Activated B cell treated with CpG ODN at 0.5 μM for 24 hours (primary cell): ENCODE measurements at regions of chr7 and their contacts with region 1.

Region 1: DNA sequence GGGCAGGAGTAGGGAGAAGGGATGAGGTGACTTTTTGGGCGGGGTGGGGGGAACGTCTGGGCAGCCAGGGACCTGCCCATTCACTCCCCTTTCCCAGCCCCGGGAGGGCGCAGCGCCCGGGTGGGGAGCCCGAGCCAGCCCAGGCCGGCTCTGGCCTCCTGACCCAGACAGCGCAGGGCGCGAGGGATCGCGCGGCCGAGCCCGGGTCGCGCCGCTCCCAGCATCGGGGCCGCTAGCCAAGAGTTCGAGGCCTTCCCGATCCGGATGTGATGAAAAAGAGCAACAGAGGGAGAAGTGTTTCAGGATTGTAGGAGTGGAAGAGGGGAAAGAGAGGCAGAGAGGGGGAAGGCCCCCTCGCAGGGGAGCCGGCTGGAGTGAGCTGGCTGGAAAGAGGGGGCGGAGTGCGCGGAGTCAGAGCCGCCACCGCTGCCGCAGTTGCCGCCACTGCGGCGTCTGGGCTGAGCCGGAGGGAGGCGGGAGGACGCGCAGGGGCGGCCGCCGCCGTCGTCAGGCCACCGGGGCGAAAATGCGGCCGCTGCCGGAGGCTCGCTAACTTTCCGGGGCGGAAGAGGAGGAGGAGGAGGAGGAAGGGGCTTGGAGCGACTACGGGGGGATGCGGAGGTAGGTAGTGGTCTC is at the start of gene MDFIC:
- DNase-seq: peak; percentile 66
- ATAC-seq: peak; percentile 63
- H3K4me3 Mint-ChIP-seq: peak within 1 kb of the TSS; percentile 95
- H3K27ac Mint-ChIP-seq: peak within 1 kb of the TSS; percentile 97
- H3K4me1 Mint-ChIP-seq: peaks cover 70% of the 10 kb centered on the region
- H3K27me3 Mint-ChIP-seq: no peaks in the 10 kb centered on the region
- CTCF ChIP-seq: no peak
- total RNA-seq, gene MDFIC: 139 and 160 TPM in 2 replicates

Region 2: DNA sequence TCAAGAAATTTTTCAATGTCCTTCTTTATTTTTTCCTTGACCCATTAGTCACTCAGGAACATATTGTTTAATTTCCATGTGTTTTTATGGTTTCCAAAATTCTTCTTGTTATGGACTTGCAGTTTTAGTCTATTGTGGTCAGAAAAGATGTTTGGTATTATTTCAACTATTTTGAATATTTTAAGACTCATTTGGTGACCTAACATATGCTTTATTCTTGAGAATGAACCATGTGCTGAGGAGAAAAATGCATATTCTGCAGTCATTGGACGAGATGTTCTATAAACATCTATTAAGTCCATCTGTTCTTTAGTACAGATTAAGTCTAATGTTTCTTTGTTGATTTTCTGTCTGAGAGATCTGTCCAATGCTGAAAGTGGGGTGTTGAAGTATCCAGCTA is 42.6 kb before region 1 on chr7:
- CTCF ChIA-PET with region 1: no interaction called
- POLR2A ChIA-PET with region 1: no interaction called
- intact Hi-C with region 1: no loop called
- DNase-seq: no peak
- ATAC-seq: no peak
- H3K4me3 Mint-ChIP-seq: no peak overlapping the region
- H3K27ac Mint-ChIP-seq: no peak overlapping the region
- H3K4me1 Mint-ChIP-seq: no peaks in the 10 kb centered on the region
- H3K27me3 Mint-ChIP-seq: no peaks in the 10 kb centered on the region
- CTCF ChIP-seq: no peak

Region 3: GRCh38 chr7:114944745-114945625 is 22.9 kb after region 1 on chr7:
- CTCF ChIA-PET with region 1: interaction called, 7 read pairs
- POLR2A ChIA-PET with region 1: interaction called, 17 read pairs
- intact Hi-C with region 1: loop called (anchors 2 kb)
- DNase-seq: no peak
- ATAC-seq: no peak
- H3K4me3 Mint-ChIP-seq: no peak overlapping the region
- H3K27ac Mint-ChIP-seq: peak overlapping the region; percentile 35
- H3K4me1 Mint-ChIP-seq: peaks cover 78% of the 10 kb centered on the region
- H3K27me3 Mint-ChIP-seq: no peaks in the 10 kb centered on the region
- CTCF ChIP-seq: no peak

Region 4: GRCh38 chr7:115724400-115725056 is 802.4 kb after region 1 on chr7:
- CTCF ChIA-PET with region 1: no interaction called
- POLR2A ChIA-PET with region 1: no interaction called
- intact Hi-C with region 1: no loop called
- DNase-seq: no peak
- ATAC-seq: no peak
- H3K4me3 Mint-ChIP-seq: no peak overlapping the region
- H3K27ac Mint-ChIP-seq: no peak overlapping the region
- H3K4me1 Mint-ChIP-seq: no peaks in the 10 kb centered on the region
- H3K27me3 Mint-ChIP-seq: peaks cover 4% of the 10 kb centered on the region
- CTCF ChIP-seq: no peak

Region 5: DNA sequence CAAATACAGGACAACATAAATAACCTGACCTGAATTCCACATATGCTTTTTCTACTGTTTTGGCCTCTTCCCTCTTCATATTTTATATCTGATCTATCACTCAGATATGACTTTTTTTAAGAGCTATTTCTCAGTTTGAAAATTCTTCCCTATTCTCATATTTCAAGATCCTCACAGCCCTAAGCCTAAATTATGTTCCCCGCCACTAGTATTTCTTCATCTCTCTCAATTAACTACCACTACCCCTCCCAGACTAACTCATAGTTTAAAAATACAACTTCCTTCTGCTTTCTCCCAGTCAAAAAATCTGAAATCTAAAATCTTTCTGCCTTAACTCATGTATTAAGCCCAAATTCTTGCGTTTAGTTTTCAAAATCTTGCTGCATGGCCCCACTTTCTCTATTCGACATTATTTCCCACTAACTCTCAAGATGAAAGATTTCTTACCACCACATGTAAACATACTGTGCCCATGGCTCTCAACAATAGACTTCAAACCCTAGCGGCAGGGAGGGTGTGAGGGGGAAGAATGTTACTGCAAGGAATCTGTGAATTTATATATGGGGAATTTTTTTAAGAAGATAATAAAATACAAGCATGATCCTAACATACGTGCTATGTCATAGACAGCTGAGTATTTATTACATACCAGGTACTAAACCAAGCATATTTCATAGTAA is 1043.8 kb after region 1 on chr7:
- CTCF ChIA-PET with region 1: no interaction called
- POLR2A ChIA-PET with region 1: no interaction called
- intact Hi-C with region 1: no loop called
- DNase-seq: no peak
- ATAC-seq: no peak
- H3K4me3 Mint-ChIP-seq: no peak overlapping the region
- H3K27ac Mint-ChIP-seq: no peak overlapping the region
- H3K4me1 Mint-ChIP-seq: no peaks in the 10 kb centered on the region
- H3K27me3 Mint-ChIP-seq: no peaks in the 10 kb centered on the region
- CTCF ChIP-seq: no peak

Region 6: DNA sequence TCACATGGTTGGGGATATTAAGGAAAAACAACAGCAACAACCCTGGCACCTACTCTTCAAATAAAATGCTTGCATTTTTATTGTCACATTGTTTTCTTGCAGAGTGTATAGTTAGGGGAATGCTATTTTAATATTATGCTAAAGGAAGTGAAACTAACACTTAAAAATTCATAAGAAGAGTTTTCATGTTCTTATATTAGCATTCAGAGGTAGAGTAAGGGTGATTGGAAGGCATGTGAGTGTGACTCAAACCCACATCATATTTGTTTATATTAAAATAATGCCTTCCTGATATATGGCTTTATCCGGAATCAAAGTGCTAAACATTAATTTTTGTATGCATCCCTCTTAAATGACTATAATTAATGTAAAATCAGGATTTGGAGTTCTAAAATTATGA is 1228.5 kb after region 1 on chr7:
- CTCF ChIA-PET with region 1: no interaction called
- POLR2A ChIA-PET with region 1: no interaction called
- intact Hi-C with region 1: loop called (anchors 10 kb)
- DNase-seq: no peak
- ATAC-seq: peak; percentile 76
- H3K4me3 Mint-ChIP-seq: peak overlapping the region; percentile 74
- H3K27ac Mint-ChIP-seq: peak overlapping the region; percentile 73
- H3K4me1 Mint-ChIP-seq: peaks cover 72% of the 10 kb centered on the region
- H3K27me3 Mint-ChIP-seq: no peaks in the 10 kb centered on the region
- CTCF ChIP-seq: no peak